IMR-90 (cell line): ENCODE measurements at regions of chr4 and their contacts with region 1.

Region 1: GRCh38 chr4:142840516-142841123 is 5.5 kb downstream of the INPP4B start:
- DNase-seq: peak; percentile 68
- ATAC-seq: no peak
- H3K4me3 ChIP-seq: no peak overlapping the region
- H3K27ac ChIP-seq: no peak overlapping the region
- H3K4me1 ChIP-seq: peaks cover 2% of the 10 kb centered on the region; the same call in 1 of the 2 replicates
- H3K27me3 ChIP-seq: no peaks in the 10 kb centered on the region
- CTCF ChIP-seq: peak; percentile 83
- POLR2A ChIP-seq: no peak
- RAD21 ChIP-seq: peak; percentile 77

Region 2: DNA sequence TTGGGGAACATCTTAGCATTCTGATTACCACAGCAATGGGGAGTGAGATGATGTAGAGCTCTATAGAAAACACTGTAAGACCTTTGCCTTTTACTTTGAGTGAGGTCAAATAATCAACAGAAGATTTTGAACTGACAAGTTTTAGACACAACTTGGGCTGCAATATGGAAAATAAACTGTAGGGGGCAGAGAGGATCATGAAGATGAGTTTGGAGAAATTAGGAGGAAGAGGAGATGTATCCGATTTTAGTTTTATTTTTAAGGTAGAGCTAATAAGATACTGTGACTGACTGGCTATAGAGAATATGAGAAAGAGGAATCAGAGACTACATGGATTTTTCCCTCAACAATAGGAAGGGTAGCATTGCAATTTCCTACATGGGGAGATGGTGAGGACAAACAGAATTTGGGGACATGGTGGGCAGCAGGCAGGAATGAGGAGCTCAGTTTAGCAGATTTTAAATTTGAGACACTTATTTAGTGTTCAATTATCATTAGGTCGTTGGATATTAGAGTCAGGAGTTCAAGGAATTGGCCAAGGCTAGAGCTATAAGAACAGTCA is 557.7 kb before region 1 on chr4:
- CTCF ChIA-PET with region 1: no interaction called
- POLR2A ChIA-PET with region 1: no interaction called
- dilution Hi-C with region 1: no loop called
- in situ Hi-C with region 1: no loop called
- intact Hi-C with region 1: loop called (anchors 5 kb)
- DNase-seq: no peak
- ATAC-seq: peak; percentile 29; the same call in 1 of the 2 replicates
- H3K4me3 ChIP-seq: no peak overlapping the region
- H3K27ac ChIP-seq: no peak overlapping the region
- H3K4me1 ChIP-seq: peaks cover 3% of the 10 kb centered on the region; the same call in 1 of the 2 replicates
- H3K27me3 ChIP-seq: no peaks in the 10 kb centered on the region
- CTCF ChIP-seq: peak; percentile 48
- POLR2A ChIP-seq: no peak
- RAD21 ChIP-seq: peak; percentile 45

Region 3: GRCh38 chr4:142719854-142720541 is 120.6 kb before region 1 on chr4:
- CTCF ChIA-PET with region 1: no interaction called
- POLR2A ChIA-PET with region 1: no interaction called
- dilution Hi-C with region 1: no loop called
- in situ Hi-C with region 1: no loop called
- intact Hi-C with region 1: loop called (anchors 5 kb)
- DNase-seq: peak; percentile 21
- ATAC-seq: peak; percentile 37; the same call in 1 of the 2 replicates
- H3K4me3 ChIP-seq: no peak overlapping the region
- H3K27ac ChIP-seq: no peak overlapping the region
- H3K4me1 ChIP-seq: no peaks in the 10 kb centered on the region
- H3K27me3 ChIP-seq: no peaks in the 10 kb centered on the region
- CTCF ChIP-seq: peak; percentile 57
- POLR2A ChIP-seq: no peak
- RAD21 ChIP-seq: peak; percentile 67